ENCODE measurements at regions of chrX and their contacts with region 1.

Region 1: GRCh38 chrX:133792198-133792953 is 193.0 kb downstream of the GPC3 start:
- DNase-seq: peak; percentile 30 to 65
- ATAC-seq: peak; percentile 68 to 86 (median 82)
- H3K4me3 ChIP-seq: peak overlapping the region; percentile 26
- H3K27ac ChIP-seq: no peak overlapping the region
- H3K4me1 ChIP-seq: no peaks in the 10 kb centered on the region
- H3K27me3 ChIP-seq: peaks cover 0 to 11% (median 0%) of the 10 kb centered on the region in 3 donors
- CTCF ChIP-seq: peak; percentile 91

Region 2: GRCh38 chrX:133921764-133922389 is 129.5 kb after region 1 on chrX:
- intact Hi-C with region 1: loop called in 1 of 2 experiments (anchors 5 kb)
- DNase-seq: peak; percentile 19 to 53
- ATAC-seq: peak; percentile 34 to 61 (median 58)
- H3K4me3 ChIP-seq: no peak overlapping the region
- H3K27ac ChIP-seq: no peak overlapping the region
- H3K4me1 ChIP-seq: no peaks in the 10 kb centered on the region
- H3K27me3 ChIP-seq: peaks cover 0 to 5% (median 0%) of the 10 kb centered on the region in 3 donors
- CTCF ChIP-seq: peak; percentile 44

Region 3: GRCh38 chrX:134026565-134027311 is 234.4 kb after region 1 on chrX:
- intact Hi-C with region 1: loop called in 1 of 2 experiments (anchors 5 kb)
- DNase-seq: no peak
- ATAC-seq: no peak
- H3K4me3 ChIP-seq: peak overlapping the region; percentile 41
- H3K27ac ChIP-seq: no peak overlapping the region
- H3K4me1 ChIP-seq: no peaks in the 10 kb centered on the region
- H3K27me3 ChIP-seq: peaks cover 0 to 6% (median 0%) of the 10 kb centered on the region in 3 donors
- CTCF ChIP-seq: peak; percentile 38

Region 4: GRCh38 chrX:134396174-134396573 is 603.8 kb after region 1 on chrX:
- intact Hi-C with region 1: loop called (anchors 5 to 10 kb)
- DNase-seq: no peak
- ATAC-seq: no peak
- H3K4me3 ChIP-seq: no peak overlapping the region
- H3K27ac ChIP-seq: no peak overlapping the region
- H3K4me1 ChIP-seq: no peaks in the 10 kb centered on the region
- H3K27me3 ChIP-seq: no peaks in the 10 kb centered on the region
- CTCF ChIP-seq: peak; percentile 70

Measured in psoas muscle (tissue), 8 donors.